ENCODE measurements at regions of chr11 and their contacts with region 1.

Region 1: DNA sequence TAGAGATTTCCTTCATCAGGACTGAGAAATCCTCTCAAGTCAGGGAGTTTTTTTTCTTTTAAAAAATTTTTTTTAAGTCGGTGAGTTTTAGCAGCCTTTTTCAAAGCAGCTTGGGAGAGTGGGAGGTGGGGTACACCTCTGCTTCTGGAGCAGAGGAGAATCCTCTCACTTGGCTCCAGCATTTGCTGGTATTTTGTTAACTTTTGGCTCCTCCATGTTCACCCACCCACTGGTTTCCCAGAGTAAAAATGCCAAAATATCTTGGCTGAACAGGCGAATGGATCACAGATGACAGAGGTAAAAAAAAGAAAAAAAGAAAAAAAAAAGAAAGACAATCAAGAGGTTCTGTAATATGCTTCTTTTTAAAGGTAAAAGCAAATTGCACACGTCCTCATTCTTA is 68.0 kb downstream of the GAB2 start:
- DNase-seq: no peak
- H3K4me3 ChIP-seq: no peak overlapping the region
- CTCF ChIP-seq: no peak
- POLR2A ChIP-seq: no peak

Region 2: GRCh38 chr11:78318321-78319114 is 31.1 kb before region 1 on chr11:
- intact Hi-C with region 1: loop called (anchors 1 kb)
- DNase-seq: no peak
- H3K4me3 ChIP-seq: no peak overlapping the region
- CTCF ChIP-seq: no peak
- POLR2A ChIP-seq: no peak

Region 3: GRCh38 chr11:80083531-80083951 is 1733.9 kb after region 1 on chr11:
- intact Hi-C with region 1: loop called (anchors 10 kb)
- DNase-seq: no peak
- H3K4me3 ChIP-seq: no peak overlapping the region
- CTCF ChIP-seq: no peak
- POLR2A ChIP-seq: no peak